Heart left ventricle (tissue), 16 donors: ENCODE measurements at regions of chr17 and their contacts with region 1.

Region 1: DNA sequence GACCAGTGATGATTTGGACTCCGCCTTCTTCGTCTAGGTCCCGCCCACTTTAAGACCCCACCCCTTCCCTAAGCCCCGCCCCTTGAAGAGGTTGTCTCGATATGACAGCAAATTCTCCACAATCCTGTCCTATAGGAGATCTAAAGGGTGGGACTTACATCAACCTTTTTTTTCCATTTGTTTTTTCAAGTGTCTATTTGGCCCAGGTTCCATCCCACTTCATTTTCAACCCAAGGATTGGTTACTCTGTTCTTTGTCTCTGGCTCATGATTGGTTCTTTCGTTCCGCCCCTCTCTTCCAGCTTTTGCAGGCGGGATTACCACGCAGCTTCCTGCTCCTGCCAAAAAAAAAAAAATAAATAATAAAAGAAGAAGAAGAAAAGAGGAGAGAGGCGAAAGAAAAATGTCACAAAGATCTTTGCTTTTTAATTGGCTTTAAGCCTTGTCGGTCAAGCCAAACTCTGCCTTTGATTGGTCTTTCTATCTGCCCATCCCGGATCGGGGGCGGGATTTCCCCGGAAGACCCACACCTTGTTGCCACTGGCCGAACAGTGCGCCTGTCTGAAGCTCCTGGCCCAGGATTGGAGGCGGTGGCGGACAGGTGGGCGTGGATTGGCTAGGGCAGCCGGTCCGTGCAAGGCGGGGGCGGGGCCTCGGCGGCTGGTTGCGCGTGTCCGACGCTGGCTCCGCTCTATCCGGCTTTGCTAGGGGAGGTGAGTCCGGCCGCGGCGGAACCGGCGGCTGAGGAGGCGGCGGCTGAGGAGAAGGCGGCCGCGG is 1.2 kb upstream of the NLK start:
- DNase-seq: peak; percentile 100
- ATAC-seq: peak; percentile 97 to 99 (median 98)
- H3K4me3 ChIP-seq: peak overlapping the region; percentile 69 to 97 (median 89)
- H3K27ac ChIP-seq: peak overlapping the region; percentile 91 to 97 (median 94)
- H3K4me1 ChIP-seq: peaks cover 6 to 45% (median 40%) of the 10 kb centered on the region in 12 donors
- H3K27me3 ChIP-seq: no peaks in the 10 kb centered on the region
- CTCF ChIP-seq: no peak
- POLR2A ChIP-seq: peak in 1 of 2 donors; percentile 91

Region 2: DNA sequence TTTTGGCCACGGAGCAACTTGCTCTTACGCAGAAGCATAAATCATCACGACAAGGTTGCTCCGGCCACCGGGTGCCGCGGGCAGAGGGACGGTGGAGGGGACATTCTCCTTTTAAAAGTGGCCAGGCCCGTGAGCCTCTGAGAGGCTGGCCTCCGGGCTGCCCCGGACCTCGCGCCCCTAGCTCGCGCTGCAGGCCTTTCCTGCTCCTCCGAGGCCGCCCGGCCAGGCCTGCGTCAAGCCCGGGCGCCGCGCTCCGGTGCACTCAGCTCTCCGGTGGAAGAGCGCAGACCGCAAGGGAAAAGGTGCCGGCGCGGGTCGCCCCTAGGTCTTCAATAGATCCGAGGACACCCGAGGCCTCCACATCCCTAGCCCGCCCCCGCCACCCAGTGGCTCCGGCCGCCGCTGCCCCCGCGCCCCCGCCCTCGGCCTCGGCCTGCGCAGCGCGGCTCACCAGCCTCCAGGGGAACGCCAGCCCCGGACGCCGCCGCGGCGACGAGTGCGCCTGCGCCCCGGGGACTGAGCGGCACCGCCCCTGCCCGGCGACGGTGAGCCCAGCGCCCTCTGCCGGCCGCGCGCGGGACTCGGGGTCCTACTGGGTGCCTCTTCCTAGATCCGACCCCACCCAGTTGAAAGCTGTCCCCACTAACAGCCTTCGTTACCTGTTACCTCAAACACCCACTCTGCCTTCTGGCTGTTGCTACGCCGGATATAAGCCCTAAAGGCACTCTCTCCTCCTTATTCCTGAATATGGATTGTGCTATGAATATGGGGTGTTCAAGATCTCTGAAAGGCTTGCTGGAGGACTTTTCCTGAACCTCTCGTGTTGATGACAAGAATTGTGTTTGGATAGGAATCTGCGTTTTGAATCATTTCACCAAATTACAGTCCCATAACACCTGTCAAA is 148.1 kb before region 1 on chr17 and contains the start of gene LYRM9:
- intact Hi-C with region 1: loop called in 6 of 10 experiments (anchors 5 to 10 kb)
- DNase-seq: peak; percentile 92 to 98 (median 93)
- ATAC-seq: peak; percentile 92 to 100 (median 100)
- H3K4me3 ChIP-seq: peak within 1 kb of the TSS; percentile 47 to 92 (median 76)
- H3K27ac ChIP-seq: peak within 1 kb of the TSS; percentile 14 to 93 (median 88)
- H3K4me1 ChIP-seq: peaks cover 0 to 27% (median 10%) of the 10 kb centered on the region in 12 donors
- H3K27me3 ChIP-seq: no peaks in the 10 kb centered on the region
- CTCF ChIP-seq: peak; percentile 80 to 99 (median 96)
- POLR2A ChIP-seq: peak in 1 of 2 donors; percentile 50
- total RNA-seq, gene LYRM9: 3.9 to 25.2 (median 9.7) TPM

Region 3: DNA sequence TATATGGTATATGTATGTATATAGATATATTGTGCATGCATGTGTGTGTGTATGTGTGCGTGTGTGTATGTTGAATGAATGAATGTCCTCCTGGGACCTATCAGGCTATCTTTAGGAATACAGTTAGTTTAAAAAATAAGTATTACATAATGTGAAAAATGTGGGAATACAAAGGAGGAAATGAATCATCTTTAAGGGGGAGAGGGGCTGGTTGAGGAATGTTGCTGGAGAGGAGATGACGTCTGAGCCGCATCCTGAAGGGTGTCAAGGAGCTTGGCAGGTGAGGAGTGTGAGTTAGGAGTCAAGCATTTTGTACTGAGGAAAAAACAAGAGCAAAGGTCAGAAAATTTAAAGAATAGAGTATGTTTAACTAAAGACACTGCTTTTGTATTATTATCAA is 61.2 kb before region 1 on chr17:
- intact Hi-C with region 1: loop called in 3 of 10 experiments (anchors 5 to 10 kb)
- DNase-seq: peak in 3 of 5 donors; percentile 39 to 60 (median 40)
- ATAC-seq: peak in 3 of 4 donors; percentile 56 to 91 (median 70)
- H3K4me3 ChIP-seq: no peak overlapping the region
- H3K27ac ChIP-seq: peak overlapping the region in 8 of 12 donors; percentile 4 to 64 (median 56)
- H3K4me1 ChIP-seq: peaks cover 0 to 20% (median 7%) of the 10 kb centered on the region in 12 donors
- H3K27me3 ChIP-seq: peaks cover 0 to under 1% (median 0%) of the 10 kb centered on the region in 9 donors
- CTCF ChIP-seq: no peak
- POLR2A ChIP-seq: no peak

Region 4: DNA sequence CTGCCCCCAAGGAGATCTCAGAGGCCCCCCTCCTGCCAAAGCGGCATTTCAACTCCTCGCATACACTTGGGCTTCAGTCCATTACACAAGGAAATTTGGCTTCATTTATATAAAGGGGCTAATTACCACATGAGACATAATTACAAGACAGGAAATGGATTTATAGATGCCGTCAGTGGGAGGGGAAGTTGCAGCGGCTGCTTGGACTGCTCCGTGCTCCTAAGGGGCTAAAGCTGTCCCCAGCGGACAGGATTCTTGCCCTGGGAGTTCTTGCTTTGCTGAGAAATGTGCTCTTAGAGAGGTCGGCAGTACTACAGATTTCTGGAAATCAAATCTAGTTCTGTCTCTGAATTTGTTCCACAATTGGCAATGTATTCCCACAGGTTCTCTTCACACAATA is 56.0 kb before region 1 on chr17:
- intact Hi-C with region 1: loop called in 3 of 10 experiments (anchors 5 to 10 kb)
- DNase-seq: peak in 3 of 5 donors; percentile 30 to 37 (median 30)
- ATAC-seq: peak in 3 of 4 donors; percentile 55 to 75 (median 73)
- H3K4me3 ChIP-seq: peak overlapping the region in 1 of 12 donors; percentile 9
- H3K27ac ChIP-seq: peak overlapping the region; percentile 12 to 79 (median 48)
- H3K4me1 ChIP-seq: peaks cover 0 to 27% (median 11%) of the 10 kb centered on the region in 12 donors
- H3K27me3 ChIP-seq: peaks cover 0 to 8% (median 0%) of the 10 kb centered on the region in 9 donors
- CTCF ChIP-seq: no peak
- POLR2A ChIP-seq: no peak

Region 5: DNA sequence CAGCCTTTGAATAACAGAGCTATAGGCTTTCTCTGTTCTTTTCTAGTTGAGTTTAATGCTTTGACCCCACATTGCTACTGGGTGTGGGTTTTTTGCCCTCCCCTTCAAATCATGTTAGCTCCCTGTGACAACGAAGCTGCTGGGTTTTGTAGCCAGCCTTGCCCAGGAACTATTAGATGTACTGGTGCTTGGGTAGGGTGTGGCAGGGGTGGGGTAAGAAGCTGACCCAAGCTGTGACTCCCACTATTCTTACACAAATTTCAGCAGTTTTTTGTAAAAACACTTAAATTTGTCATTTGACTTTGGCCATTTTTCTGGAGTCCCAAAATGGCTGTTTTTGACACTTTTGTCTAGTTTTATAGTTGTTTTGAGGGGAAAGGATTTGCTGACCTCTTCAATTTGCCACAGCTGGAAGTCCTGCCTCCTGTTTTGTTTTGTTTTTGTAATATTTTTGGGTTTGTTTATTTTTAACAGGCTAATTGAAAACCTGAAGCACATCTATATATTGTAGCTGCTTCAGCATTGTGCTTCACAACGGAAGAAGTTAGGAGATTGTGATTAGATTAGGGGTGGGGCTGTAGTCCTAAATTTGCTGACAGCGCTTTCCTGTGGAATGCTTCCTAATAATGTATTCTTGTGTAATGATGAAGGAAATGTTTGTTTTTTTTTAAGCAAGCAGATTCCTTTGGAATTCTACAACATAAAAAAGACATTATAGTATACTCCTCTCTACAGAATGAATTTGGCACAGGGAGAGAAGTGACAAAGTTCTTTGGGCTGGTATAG is 71.2 kb after region 1 on chr17:
- intact Hi-C with region 1: loop called in 1 of 10 experiments (anchors 10 kb)
- DNase-seq: no peak
- ATAC-seq: peak; percentile 26 to 88 (median 54)
- H3K4me3 ChIP-seq: no peak overlapping the region
- H3K27ac ChIP-seq: peak overlapping the region; percentile 4 to 62 (median 36)
- H3K4me1 ChIP-seq: peaks cover 0 to 40% (median 19%) of the 10 kb centered on the region in 12 donors
- H3K27me3 ChIP-seq: no peaks in the 10 kb centered on the region
- CTCF ChIP-seq: no peak
- POLR2A ChIP-seq: no peak

Region 6: DNA sequence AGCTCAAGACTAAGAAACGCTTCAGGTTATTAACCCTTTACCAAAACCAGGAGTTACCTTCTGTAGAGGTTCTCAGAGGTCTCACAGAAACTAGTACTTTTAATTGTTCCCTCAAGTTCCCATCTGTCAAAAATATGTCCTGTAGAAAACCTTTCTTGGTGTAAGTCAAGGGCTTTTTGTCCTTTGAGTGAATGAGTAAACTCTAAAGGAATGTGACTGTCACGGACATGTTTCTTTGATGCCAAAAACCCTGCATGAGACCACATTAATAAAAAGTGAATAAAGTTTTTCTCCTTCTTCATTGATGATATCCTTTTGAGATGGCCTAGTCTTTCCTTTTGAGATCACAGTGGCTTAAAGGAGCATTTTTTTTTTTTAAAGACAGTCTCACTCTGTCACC is 104.1 kb after region 1 on chr17:
- intact Hi-C with region 1: loop called in 1 of 10 experiments (anchors 10 kb)
- DNase-seq: no peak
- ATAC-seq: no peak
- H3K4me3 ChIP-seq: no peak overlapping the region
- H3K27ac ChIP-seq: no peak overlapping the region
- H3K4me1 ChIP-seq: peaks cover 0 to 14% (median 0%) of the 10 kb centered on the region in 12 donors
- H3K27me3 ChIP-seq: no peaks in the 10 kb centered on the region
- CTCF ChIP-seq: no peak
- POLR2A ChIP-seq: no peak